ENCODE measurements at regions of chr14 and their contacts with region 1.

Region 1: DNA sequence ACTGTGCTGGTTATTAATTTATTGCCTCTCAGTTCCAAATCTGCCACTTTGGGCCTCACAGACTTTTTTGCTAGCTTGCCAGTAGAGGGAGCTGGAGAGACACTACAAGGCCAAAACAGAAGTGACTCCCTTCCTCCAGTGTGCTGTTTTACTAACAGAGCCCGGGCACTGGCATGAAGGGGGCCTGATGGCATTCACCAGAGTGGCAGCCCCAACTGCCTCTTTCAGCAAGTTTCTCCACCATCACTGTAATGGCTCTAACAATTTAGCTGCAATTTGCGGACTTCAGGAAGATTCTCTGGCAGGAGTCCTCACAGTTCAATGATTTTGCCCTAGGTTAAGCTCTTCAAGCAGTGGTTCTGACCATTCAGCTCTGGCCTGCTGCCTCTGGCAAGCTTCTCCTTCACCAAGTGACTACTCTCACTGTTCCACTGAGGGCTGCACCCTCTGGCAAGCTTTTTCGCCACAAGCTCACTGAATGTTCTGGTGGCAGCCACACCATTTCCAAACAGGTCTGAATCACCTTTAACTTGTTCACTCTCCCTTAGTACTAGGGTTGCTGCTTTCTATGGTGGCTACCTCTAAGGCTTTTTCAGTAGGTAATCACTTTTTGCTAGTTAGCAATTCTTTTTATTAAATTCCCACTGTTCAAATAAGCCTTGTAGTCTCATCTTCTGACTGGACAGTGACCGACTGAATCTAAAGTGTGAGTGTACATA is 104.9 kb downstream of the ZC3H14 start:
- DNase-seq: peak; percentile 70
- ATAC-seq: peak; percentile 87
- H3K4me3 ChIP-seq: no peak overlapping the region
- H3K27ac ChIP-seq: no peak overlapping the region
- H3K4me1 ChIP-seq: peaks cover 19% of the 10 kb centered on the region
- H3K27me3 ChIP-seq: no peaks in the 10 kb centered on the region
- CTCF ChIP-seq: peak; percentile 84
- EP300 ChIP-seq: no peak
- POLR2A ChIP-seq: no peak
- RAD21 ChIP-seq: peak; percentile 71

Region 2: GRCh38 chr14:88868558-88869159 is 200.9 kb after region 1 on chr14:
- CTCF ChIA-PET with region 1: interaction called, 9 read pairs
- POLR2A ChIA-PET with region 1: no interaction called
- in situ Hi-C with region 1: no loop called
- intact Hi-C with region 1: loop called (anchors 1 kb)
- DNase-seq: peak; percentile 12
- ATAC-seq: peak; percentile 71
- H3K4me3 ChIP-seq: no peak overlapping the region
- H3K27ac ChIP-seq: no peak overlapping the region
- H3K4me1 ChIP-seq: no peaks in the 10 kb centered on the region
- H3K27me3 ChIP-seq: no peaks in the 10 kb centered on the region
- CTCF ChIP-seq: peak; percentile 52
- EP300 ChIP-seq: no peak
- POLR2A ChIP-seq: no peak
- RAD21 ChIP-seq: no peak

Region 3: DNA sequence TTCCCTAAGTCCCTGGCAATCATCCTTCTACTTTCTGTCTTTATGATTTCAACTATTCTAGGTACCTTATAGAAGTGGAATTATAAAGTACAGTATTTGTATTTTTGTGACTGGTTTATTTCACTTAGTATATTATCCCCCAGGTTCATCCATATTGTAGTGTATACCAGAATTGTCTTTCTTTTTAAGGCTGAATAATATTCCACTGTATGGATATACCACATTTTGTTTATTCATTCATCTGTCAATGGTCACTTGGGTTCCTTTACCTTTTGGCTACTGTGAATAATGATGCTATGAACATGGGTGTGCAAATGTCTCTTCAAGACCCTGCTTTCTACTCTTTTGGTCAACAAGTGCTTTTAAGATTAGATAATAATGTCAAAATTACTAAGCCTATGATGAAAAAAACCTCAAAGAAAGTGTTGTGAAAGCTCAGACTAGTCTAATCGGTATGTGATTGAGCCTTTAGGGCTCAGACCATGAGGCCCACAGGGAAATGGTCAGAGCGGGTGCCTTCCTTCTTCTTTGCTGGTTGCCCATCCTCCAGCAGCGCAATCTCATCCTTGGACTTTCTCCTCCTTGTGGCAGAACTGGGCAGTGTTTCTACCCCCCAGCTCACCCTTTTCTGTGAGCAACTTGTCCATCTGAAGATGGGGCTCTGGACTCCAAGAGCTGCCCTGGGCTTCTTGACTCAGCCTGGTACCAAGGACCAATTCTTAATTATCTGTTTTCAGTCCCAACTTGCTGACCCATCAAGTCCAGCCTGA is 262.1 kb after region 1 on chr14:
- CTCF ChIA-PET with region 1: interaction called, 4 read pairs
- POLR2A ChIA-PET with region 1: no interaction called
- in situ Hi-C with region 1: no loop called
- intact Hi-C with region 1: loop called (anchors 1 kb)
- DNase-seq: peak; percentile 3
- ATAC-seq: peak; percentile 73
- H3K4me3 ChIP-seq: no peak overlapping the region
- H3K27ac ChIP-seq: no peak overlapping the region
- H3K4me1 ChIP-seq: no peaks in the 10 kb centered on the region
- H3K27me3 ChIP-seq: peaks cover 0 to 22% of the 10 kb centered on the region in 2 experiments; a peak in 3 of 5 replicates
- CTCF ChIP-seq: peak; percentile 42
- EP300 ChIP-seq: no peak
- POLR2A ChIP-seq: no peak
- RAD21 ChIP-seq: no peak

Region 4: GRCh38 chr14:89013084-89013504 is 345.4 kb after region 1 on chr14:
- CTCF ChIA-PET with region 1: interaction called, 11 read pairs
- POLR2A ChIA-PET with region 1: no interaction called
- in situ Hi-C with region 1: loop called (anchors 10 kb)
- intact Hi-C with region 1: no loop called
- DNase-seq: peak; percentile 90
- ATAC-seq: peak; percentile 97
- H3K4me3 ChIP-seq: peak overlapping the region; percentile 44 to 54 (median 47); a peak in 5 of 6 replicates
- H3K27ac ChIP-seq: no peak overlapping the region
- H3K4me1 ChIP-seq: peaks cover 31% of the 10 kb centered on the region
- H3K27me3 ChIP-seq: no peaks in the 10 kb centered on the region
- CTCF ChIP-seq: peak; percentile 85
- EP300 ChIP-seq: no peak
- POLR2A ChIP-seq: peak in 1 of 2 experiments; percentile 48; a peak in 1 of 4 replicates
- RAD21 ChIP-seq: peak; percentile 49